GM12878 (cell line): ENCODE measurements at regions of chr2 and their contacts with region 1.

Region 1: GRCh38 chr2:61074100-61074499 is 8.4 kb downstream of the SANBR start:
- DNase-seq: no peak
- ATAC-seq: no peak
- H3K4me3 ChIP-seq: no peak overlapping the region
- H3K27ac ChIP-seq: no peak overlapping the region
- H3K4me1 ChIP-seq: no peaks in the 10 kb centered on the region
- H3K27me3 ChIP-seq: no peaks in the 10 kb centered on the region
- CTCF ChIP-seq: no peak
- EP300 ChIP-seq: no peak
- POLR2A ChIP-seq: no peak
- RAD21 ChIP-seq: no peak

Region 2: GRCh38 chr2:61059382-61059781 is 14.7 kb before region 1 on chr2:
- CTCF ChIA-PET with region 1: interaction called, 5 read pairs
- POLR2A ChIA-PET with region 1: interaction called, 3 read pairs
- RAD21 ChIA-PET with region 1: no interaction called
- SMC1A ChIA-PET with region 1: interaction called, 14 read pairs
- in situ Hi-C with region 1: no loop called
- intact Hi-C with region 1: no loop called
- DNase-seq: no peak
- ATAC-seq: no peak
- H3K4me3 ChIP-seq: no peak overlapping the region
- H3K27ac ChIP-seq: no peak overlapping the region
- H3K4me1 ChIP-seq: no peaks in the 10 kb centered on the region
- H3K27me3 ChIP-seq: no peaks in the 10 kb centered on the region
- CTCF ChIP-seq: no peak
- EP300 ChIP-seq: no peak
- POLR2A ChIP-seq: no peak
- RAD21 ChIP-seq: no peak